ENCODE measurements at regions of chr7 and their contacts with region 1.

Region 1: GRCh38 chr7:25259587-25260243 is 31.4 kb upstream of the NPVF start:
- DNase-seq: peak; percentile 64 to 75
- ATAC-seq: peak; percentile 72

Region 2: DNA sequence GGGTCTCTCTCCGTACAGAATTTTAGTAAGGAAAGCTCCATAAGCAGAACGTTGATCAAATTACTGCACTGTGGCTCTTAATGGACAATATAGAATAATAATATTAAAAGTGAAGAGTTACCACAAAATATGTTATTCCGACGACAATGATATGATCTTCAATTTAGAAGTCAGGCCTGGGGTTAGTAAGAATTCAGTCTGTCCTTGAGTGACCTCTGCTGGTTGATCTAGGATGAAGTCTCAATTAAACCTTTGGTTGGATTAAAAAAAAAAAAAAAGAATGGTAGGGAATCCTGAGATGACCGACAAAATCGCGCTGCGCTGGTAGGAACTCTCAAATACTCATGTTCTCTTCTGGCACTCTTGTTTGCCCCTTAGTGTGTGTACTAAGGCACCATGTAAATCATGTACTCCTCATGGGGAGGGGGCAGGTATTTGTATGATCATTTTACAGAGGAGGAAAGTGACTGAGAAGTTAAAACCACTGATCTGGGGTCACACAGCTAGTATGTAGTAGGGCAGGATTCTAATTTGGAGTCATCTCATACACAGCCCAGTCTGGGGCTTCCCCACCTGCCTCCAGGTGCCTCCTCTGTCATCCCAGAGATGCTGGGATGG is 129.9 kb after region 1 on chr7:
- intact Hi-C with region 1: loop called (anchors 2 to 10 kb)
- DNase-seq: peak in 1 of 2 donors; percentile 23
- ATAC-seq: peak; percentile 73

Region 3: DNA sequence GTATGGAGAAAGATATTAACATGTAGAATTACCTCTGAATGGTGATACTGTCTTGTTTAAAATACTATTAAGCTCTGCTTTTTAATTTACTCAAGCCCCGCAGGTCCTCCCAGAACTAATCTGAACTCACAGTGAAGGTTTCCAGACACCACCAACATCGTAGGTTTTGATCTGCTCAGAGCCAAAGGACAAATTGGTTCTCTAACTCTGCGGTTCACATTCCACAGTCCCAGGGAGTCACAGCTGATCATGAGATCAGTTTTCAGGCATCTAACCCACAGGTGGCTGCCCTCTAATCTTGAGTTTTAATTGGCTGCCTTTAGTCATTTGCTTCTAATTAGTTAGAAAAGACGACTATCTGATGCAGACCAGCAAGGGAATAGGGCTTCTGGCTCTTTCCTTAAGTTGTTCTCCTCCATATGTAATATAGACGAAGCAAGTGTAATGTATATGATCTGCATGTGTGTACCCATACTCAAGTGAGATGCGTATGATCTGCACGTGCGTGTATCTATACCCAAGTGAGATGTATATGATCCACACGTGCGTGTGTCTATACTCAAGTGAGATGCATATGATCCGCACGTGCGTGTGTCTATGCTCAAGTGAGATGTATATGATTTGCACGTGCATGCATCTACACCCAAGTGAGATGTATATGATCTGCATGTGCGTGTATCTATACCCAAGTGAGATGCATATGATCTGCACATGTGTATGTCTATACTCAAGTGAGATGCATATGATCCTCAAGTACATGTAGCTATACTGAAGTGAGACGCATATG is 300.1 kb after region 1 on chr7:
- intact Hi-C with region 1: loop called in 1 of 2 experiments (anchors 5 kb)
- DNase-seq: no peak
- ATAC-seq: no peak

Measured in left colon (tissue), 2 donors.